ENCODE measurements at regions of chr6 and their contacts with region 1.

Region 1: GRCh38 chr6:87701676-87702588 is at the start of gene AKIRIN2:
- DNase-seq: peak; percentile 97
- H3K4me3 Mint-ChIP-seq: peak within 1 kb of the TSS; percentile 99
- H3K27ac Mint-ChIP-seq: peak within 1 kb of the TSS; percentile 97
- H3K4me1 Mint-ChIP-seq: peaks cover 44% of the 10 kb centered on the region
- H3K27me3 Mint-ChIP-seq: no peaks in the 10 kb centered on the region
- total RNA-seq, gene AKIRIN2: 40.1 and 42.0 TPM in 2 replicates

Region 2: GRCh38 chr6:87154993-87155841 is 546.7 kb before region 1 on chr6 and contains the start of gene ZNF292:
- intact Hi-C with region 1: loop called (anchors 1 kb)
- DNase-seq: peak; percentile 97
- H3K4me3 Mint-ChIP-seq: peak within 1 kb of the TSS; percentile 93
- H3K27ac Mint-ChIP-seq: peak within 1 kb of the TSS; percentile 98
- H3K4me1 Mint-ChIP-seq: peaks cover 50% of the 10 kb centered on the region
- H3K27me3 Mint-ChIP-seq: no peaks in the 10 kb centered on the region
- total RNA-seq, gene ZNF292: 50.1 and 51.7 TPM in 2 replicates

Region 3: DNA sequence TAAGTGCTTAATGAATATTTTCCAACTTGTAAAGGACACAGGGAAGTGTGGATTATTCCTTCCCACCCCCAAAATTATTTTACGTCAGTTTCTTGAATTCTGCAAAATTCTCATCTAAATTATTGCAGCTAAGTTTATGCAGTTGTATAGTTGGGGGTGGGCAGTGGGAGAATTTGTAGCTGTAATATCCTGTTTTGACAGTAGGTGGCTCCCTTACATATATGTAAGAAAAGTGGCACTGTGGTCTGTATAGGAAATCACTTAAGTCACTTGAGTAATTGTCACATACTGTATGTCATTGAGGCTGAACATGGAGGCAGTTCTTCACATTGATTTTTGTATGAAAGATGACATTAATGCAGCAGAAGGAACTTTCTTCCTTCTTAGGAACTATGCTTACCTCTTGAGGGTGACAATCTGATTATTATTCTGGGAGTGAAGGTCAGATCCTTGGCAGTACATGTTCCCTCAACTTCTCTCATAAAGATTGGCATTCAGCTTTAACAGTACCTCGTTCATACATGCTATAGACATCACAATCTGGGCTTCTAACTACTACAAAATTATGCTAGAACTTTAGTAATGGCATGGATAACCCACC is 308.8 kb before region 1 on chr6:
- intact Hi-C with region 1: loop called (anchors 5 kb)
- DNase-seq: peak; percentile 14
- H3K4me3 Mint-ChIP-seq: no peak overlapping the region
- H3K27ac Mint-ChIP-seq: no peak overlapping the region
- H3K4me1 Mint-ChIP-seq: no peaks in the 10 kb centered on the region
- H3K27me3 Mint-ChIP-seq: no peaks in the 10 kb centered on the region

Region 4: DNA sequence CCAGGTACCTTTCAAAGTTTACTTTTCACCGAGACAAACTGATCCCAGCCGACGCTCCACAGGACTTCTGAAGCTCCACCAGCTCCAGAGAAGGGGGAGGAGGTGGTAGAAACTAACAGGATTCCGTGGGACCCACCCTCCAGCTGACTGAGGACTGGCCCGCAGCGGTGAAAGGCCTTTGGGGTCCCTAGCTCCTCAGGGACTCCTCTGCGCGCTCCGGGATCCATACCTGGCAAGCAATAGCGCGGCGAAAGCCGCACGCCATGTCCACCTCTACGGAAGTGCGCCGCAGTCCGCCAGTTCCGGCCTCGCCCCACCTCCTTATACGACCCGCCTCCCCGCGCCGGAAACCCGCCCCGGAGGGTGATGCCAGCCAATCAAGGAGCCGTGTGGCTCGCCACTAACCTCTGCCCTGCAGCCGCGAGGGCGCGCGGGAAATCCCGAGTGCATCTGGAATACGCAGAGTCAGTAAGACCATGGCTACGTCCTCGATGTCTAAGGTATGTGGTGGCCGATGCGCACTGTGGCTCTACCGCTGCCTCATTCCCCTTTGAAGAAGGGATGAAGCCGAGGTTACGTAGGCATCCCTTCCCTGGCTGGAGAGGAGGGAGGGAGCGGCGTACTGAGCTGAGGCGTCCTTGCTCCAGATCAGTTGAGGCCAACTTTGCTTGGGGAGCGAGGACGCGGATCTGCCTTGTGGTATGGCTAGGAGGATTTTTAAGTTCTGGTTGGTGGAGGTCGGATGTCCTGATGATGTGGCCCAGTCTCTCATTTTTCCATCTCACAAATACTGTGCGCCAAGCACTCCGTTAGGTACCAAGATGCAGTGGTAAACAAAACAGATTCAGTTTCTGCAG is 112.0 kb before region 1 on chr6 and contains the starts of genes ORC3 and RARS2:
- intact Hi-C with region 1: loop called (anchors 1 kb)
- DNase-seq: peak; percentile 96
- H3K4me3 Mint-ChIP-seq: peak within 1 kb of the TSS; percentile 90
- H3K27ac Mint-ChIP-seq: peak within 1 kb of the TSS; percentile 79
- H3K4me1 Mint-ChIP-seq: peaks cover 42% of the 10 kb centered on the region
- H3K27me3 Mint-ChIP-seq: no peaks in the 10 kb centered on the region
- total RNA-seq, gene ORC3: 34.7 and 38.6 TPM in 2 replicates
- total RNA-seq, gene RARS2: 24.6 and 24.7 TPM in 2 replicates

Region 5: DNA sequence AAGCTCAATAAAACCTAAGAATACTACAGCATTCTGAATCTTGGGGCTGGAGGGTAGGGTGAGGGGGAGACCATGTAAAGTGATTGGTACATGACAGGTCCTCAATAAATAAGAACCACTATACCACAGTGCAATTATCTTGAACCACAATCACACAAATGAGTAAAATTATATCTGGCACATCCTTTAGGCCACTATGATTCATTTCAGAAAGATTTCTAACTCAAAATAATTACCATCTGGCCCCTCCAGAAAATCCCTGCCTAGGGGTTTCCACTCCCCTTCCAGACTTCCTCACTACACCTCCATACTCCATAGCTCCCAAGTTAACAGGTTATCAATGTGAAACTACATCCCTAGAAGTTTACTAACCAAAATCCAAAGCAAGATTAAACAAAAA is 19.6 kb before region 1 on chr6:
- intact Hi-C with region 1: loop called (anchors 1 kb)
- DNase-seq: no peak
- H3K4me3 Mint-ChIP-seq: no peak overlapping the region
- H3K27ac Mint-ChIP-seq: no peak overlapping the region
- H3K4me1 Mint-ChIP-seq: peaks cover 48% of the 10 kb centered on the region
- H3K27me3 Mint-ChIP-seq: no peaks in the 10 kb centered on the region

Region 6: GRCh38 chr6:87808005-87808757 is 106.2 kb after region 1 on chr6:
- intact Hi-C with region 1: loop called (anchors 10 kb)
- DNase-seq: no peak
- H3K4me3 Mint-ChIP-seq: no peak overlapping the region
- H3K27ac Mint-ChIP-seq: peak overlapping the region; percentile 36
- H3K4me1 Mint-ChIP-seq: peaks cover 8% of the 10 kb centered on the region
- H3K27me3 Mint-ChIP-seq: no peaks in the 10 kb centered on the region

Region 7: GRCh38 chr6:89080542-89081422 is 1378.8 kb after region 1 on chr6 and contains the start of gene PNRC1:
- intact Hi-C with region 1: loop called (anchors 2 kb)
- DNase-seq: peak; percentile 99
- H3K4me3 Mint-ChIP-seq: peak within 1 kb of the TSS; percentile 95
- H3K27ac Mint-ChIP-seq: peak within 1 kb of the TSS; percentile 98
- H3K4me1 Mint-ChIP-seq: peaks cover 39% of the 10 kb centered on the region
- H3K27me3 Mint-ChIP-seq: no peaks in the 10 kb centered on the region
- total RNA-seq, gene PNRC1: 45.6 and 47.6 TPM in 2 replicates

Measured in activated T-helper 1 cell treated with anti-CD3 and anti-CD28 coated beads, Interleukin-12 subunit alpha, Interleukin-12 subunit beta, Interleukin-2, Interleukin-4 antibody, amounts not matched to agents 30 ng/mL and 10 ng/mL and 1 ng/mL, durations not matched to agents 14 hours and 24 hours and 36 hours (primary cell).